ENCODE measurements at regions of chr5 and their contacts with region 1.

Region 1: DNA sequence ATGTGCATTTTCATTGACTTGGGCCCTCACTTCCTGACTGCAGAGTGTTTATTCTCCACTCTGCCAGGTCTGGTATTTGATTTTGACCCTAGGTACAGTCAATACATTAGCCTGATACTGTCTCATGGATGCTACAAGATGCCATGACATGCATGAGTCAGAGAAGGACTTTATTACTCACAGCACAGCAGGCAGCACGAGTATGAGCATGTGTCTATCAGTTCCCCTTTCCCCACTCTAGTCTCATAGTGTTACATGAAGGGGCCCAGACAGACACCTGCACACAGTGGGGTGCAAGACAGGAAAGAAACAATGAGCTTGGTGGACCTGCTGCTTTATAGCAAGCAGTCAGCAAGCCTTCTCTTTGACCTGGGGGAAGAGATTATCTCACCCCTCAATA is 19.6 kb downstream of the ITGA2 start:
- DNase-seq: peak; percentile 74
- H3K4me3 Mint-ChIP-seq: peak overlapping the region; percentile 34
- H3K27ac Mint-ChIP-seq: peak overlapping the region; percentile 85
- H3K4me1 Mint-ChIP-seq: peaks cover 65% of the 10 kb centered on the region
- H3K27me3 Mint-ChIP-seq: peaks cover 4% of the 10 kb centered on the region

Region 2: DNA sequence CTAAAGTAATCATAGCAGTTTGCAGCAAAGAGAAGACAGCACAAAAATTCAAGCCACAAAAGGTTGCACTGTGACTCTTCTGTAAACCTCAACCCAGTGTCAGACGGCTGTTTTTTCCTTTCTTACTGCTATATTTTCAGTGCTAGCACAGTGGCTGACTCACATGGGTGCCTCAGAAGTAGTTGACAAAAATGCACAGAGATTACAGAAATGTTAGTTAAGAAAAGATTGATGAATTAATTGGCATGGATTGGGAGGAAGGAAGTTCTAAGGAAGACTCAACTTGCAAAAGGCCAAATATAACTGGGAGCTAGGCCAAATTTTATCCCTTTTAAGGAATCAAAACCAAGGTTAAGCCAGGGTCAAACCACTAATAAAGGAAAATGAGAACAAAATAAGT is 264.8 kb before region 1 on chr5:
- intact Hi-C with region 1: loop called (anchors 5 kb)
- DNase-seq: peak; percentile 89
- H3K4me3 Mint-ChIP-seq: peak overlapping the region; percentile 31
- H3K27ac Mint-ChIP-seq: peak overlapping the region; percentile 76
- H3K4me1 Mint-ChIP-seq: peaks cover 49% of the 10 kb centered on the region
- H3K27me3 Mint-ChIP-seq: no peaks in the 10 kb centered on the region

Region 3: GRCh38 chr5:52989781-52990527 is 18.8 kb before region 1 on chr5:
- intact Hi-C with region 1: loop called (anchors 1 kb)
- DNase-seq: peak; percentile 85
- H3K4me3 Mint-ChIP-seq: peak overlapping the region; percentile 84
- H3K27ac Mint-ChIP-seq: peak overlapping the region; percentile 66
- H3K4me1 Mint-ChIP-seq: peaks cover 44% of the 10 kb centered on the region
- H3K27me3 Mint-ChIP-seq: peaks cover 1% of the 10 kb centered on the region

Region 4: GRCh38 chr5:53031695-53032096 is 22.9 kb after region 1 on chr5:
- intact Hi-C with region 1: loop called (anchors 1 kb)
- DNase-seq: peak; percentile 86
- H3K4me3 Mint-ChIP-seq: peak overlapping the region; percentile 53
- H3K27ac Mint-ChIP-seq: peak overlapping the region; percentile 80
- H3K4me1 Mint-ChIP-seq: peaks cover 57% of the 10 kb centered on the region
- H3K27me3 Mint-ChIP-seq: no peaks in the 10 kb centered on the region

Region 5: DNA sequence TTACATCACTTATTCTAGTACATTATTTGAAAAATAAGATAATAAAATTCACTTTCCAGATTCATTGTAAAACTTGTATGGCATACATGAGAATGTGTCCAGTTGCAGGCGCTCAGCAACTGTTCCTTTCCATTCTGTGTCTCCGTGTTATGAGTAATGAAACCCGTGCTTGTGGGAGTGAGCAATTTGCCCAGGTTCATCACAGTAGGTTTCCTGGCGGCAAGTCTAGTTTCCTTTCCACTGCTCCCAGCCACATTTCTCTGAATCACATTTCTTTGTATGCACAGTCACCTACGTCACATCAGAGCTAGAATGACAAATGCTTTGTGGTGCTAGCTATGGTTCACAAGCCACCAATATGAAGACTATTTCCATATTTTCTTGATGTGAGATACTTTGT is 60.9 kb after region 1 on chr5:
- intact Hi-C with region 1: loop called (anchors 1 kb)
- DNase-seq: peak; percentile 92
- H3K4me3 Mint-ChIP-seq: peak overlapping the region; percentile 54
- H3K27ac Mint-ChIP-seq: peak overlapping the region; percentile 85
- H3K4me1 Mint-ChIP-seq: peaks cover 28% of the 10 kb centered on the region
- H3K27me3 Mint-ChIP-seq: no peaks in the 10 kb centered on the region